Activated T-helper 2 cell treated with anti-CD3 and anti-CD28 coated beads, Interferon-gamma antibody, Interleukin-2, Interleukin-4, amounts not matched to agents 10 μg/mL and 5 μg/mL and 100 μg/mL, durations not matched to agents 14 hours and 24 hours and 36 hours (primary cell): ENCODE measurements at regions of chr19 and their contacts with region 1.

Region 1: GRCh38 chr19:9435279-9436268 is at the start of gene ZNF266:
- DNase-seq: peak; percentile 90
- H3K4me3 Mint-ChIP-seq: peak within 1 kb of the TSS; percentile 94
- H3K27ac Mint-ChIP-seq: peak within 1 kb of the TSS; percentile 98
- H3K4me1 Mint-ChIP-seq: peaks cover 20% of the 10 kb centered on the region
- H3K27me3 Mint-ChIP-seq: no peaks in the 10 kb centered on the region
- total RNA-seq, gene ZNF266: 26.5 and 27.3 TPM in 2 replicates

Region 2: DNA sequence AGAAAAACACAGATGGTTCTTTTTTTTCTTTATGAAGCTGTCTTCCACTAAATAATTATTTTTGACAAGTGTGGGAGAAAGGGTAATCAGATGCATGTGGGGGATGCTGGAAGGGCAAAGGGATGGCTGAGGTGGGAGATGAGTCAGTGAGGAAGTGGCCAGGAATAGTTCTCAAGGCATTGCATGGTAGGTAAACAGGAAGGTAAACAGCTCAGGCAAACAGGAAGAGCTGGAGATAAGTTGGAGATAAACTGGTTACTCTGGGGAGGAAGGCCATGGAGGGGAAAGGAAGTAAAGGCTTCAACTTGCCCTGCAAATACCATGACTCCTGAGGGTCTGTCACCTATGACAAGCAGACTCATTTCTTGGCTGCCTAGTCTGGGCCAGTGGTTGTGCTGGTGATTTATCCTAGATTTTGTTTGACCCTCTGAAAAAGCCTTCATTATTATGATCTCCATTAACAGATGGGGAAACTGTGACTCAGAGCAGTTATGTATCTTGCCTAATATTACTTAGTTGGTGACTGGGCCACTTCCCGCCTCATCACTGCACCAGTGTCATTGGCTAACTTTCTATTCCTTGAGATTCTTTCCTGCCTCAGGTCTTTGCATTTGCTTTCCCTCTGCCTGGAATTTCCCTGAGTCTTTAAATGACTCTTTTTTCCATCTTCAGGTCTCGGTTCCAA is 754.1 kb before region 1 on chr19:
- intact Hi-C with region 1: no loop called
- DNase-seq: no peak
- H3K4me3 Mint-ChIP-seq: no peak overlapping the region
- H3K27ac Mint-ChIP-seq: no peak overlapping the region
- H3K4me1 Mint-ChIP-seq: peaks cover 24% of the 10 kb centered on the region
- H3K27me3 Mint-ChIP-seq: peaks cover 7% of the 10 kb centered on the region

Region 3: DNA sequence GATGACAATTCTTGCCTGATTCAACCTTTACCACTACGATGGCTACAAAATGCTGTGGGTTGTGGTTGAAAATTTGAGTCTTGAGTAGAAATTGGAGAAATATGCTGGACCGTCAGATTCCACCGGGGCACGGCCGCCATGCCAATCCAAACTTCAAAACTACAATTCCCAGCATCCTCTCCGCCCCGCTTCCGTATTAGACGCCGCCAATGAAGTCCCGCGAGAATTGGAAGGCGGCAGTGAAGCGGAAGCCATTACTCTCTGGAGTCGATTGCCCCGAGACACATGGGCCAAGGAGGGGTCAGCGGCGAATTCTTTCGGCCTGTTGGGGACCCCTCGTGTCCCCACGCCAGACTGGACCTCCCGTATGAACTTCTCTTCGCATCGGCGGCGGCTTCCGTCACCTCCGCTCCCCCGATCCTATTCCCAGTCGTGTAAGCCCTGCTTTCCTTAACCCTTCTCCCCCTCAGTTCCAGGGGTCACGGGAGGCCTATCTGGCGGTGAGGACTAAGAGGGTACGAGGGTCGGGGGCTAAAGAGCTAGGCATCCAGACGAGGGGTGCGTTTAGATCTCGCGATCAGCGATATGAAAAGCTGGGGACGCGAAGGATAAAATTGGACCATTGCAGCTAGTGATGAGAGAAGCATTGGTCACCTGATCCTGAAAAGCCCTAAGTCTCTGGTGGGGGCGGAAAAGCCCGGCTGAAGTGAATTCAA is 295.3 kb before region 1 on chr19 and contains the start of gene ZNF317:
- intact Hi-C with region 1: loop called (anchors 2 kb)
- DNase-seq: peak; percentile 86
- H3K4me3 Mint-ChIP-seq: peak within 1 kb of the TSS; percentile 94
- H3K27ac Mint-ChIP-seq: peak within 1 kb of the TSS; percentile 95
- H3K4me1 Mint-ChIP-seq: peaks cover 17% of the 10 kb centered on the region
- H3K27me3 Mint-ChIP-seq: no peaks in the 10 kb centered on the region
- total RNA-seq, gene ZNF317: 44.2 and 50.0 TPM in 2 replicates

Region 4: DNA sequence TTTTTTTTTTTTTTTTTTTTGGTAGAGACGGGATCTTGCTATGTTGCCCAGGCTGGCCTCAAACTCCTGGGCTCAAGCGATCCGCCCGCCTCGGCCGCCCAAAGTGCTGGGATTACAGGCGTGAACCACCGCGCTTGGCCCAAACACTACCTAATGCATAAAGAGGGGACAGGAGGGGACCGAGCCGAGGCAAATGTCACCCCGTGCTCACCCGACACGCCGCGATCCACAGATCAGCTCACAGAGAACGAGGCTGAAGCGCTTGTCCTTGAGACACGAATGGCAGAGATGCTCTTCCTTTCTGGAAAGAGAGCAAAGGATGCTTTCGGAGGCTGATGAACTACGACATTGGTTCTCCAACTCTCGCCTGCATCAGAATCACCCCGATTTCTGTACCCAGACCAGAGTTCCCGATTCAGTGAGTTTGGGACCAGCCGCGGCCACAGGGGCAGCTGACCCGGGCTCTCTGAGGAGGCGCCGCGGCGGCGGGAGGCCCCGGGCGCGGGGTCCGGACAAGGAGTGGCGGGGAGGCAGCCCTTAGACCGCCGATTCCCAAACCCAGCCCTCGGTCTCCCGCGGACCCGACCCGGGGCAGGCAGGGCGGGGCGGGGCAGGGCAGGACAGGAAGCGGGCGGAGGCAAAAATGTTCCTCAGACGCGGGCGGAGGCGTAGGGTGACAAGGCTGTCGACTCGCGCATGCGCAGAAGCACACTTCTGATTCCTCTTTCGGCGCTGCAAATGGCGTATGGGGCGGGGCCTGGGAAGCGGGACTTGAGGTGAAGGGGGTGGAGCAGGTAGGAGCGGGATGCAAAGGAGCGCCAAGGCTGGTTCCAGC is 126.2 kb before region 1 on chr19 and contains the start of gene ZNF699:
- intact Hi-C with region 1: loop called (anchors 1 kb)
- DNase-seq: peak; percentile 98
- H3K4me3 Mint-ChIP-seq: peak within 1 kb of the TSS; percentile 79
- H3K27ac Mint-ChIP-seq: peak within 1 kb of the TSS; percentile 89
- H3K4me1 Mint-ChIP-seq: peaks cover 12% of the 10 kb centered on the region
- H3K27me3 Mint-ChIP-seq: no peaks in the 10 kb centered on the region
- total RNA-seq, gene ZNF699: 4.4 and 5.2 TPM in 2 replicates

Region 5: DNA sequence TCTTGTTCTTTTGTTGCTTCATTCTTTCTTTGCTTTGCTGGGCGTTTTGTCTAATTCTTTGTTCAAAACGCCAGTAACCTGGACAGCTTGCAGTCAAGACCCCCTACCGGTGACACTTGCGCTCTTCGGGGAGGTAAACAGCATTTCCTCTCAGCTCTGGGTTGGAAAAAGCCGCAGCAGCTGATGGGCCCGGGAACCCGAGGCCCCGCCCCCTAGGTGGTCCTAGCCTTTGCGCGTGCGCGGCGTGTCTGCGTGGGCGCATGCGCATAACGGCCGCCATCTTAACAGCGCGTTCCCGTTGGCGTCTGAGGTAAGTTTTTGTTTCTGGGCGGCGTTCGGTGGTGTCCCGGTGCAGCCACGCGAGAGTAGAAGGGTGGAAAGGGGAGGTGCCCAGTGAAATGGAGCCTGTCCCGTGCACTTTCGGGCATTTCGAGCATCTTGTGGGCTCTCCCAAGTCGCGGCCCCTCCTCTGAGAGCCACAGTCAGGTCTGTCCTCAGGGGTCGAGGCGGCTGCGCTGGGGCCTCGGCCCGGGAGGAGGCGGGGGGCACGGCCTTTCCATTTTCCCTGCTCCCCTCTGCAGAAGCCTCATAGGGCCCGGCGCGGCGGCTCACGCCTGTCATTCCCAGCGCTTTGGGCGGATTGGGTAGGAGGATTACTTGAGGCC is 111.5 kb before region 1 on chr19 and contains the start of gene ZNF559:
- intact Hi-C with region 1: loop called (anchors 2 kb)
- DNase-seq: peak; percentile 94
- H3K4me3 Mint-ChIP-seq: peak within 1 kb of the TSS; percentile 86
- H3K27ac Mint-ChIP-seq: peak within 1 kb of the TSS; percentile 88
- H3K4me1 Mint-ChIP-seq: peaks cover 12% of the 10 kb centered on the region
- H3K27me3 Mint-ChIP-seq: no peaks in the 10 kb centered on the region
- total RNA-seq, gene ZNF559: 8.2 and 8.4 TPM in 2 replicates

Region 6: DNA sequence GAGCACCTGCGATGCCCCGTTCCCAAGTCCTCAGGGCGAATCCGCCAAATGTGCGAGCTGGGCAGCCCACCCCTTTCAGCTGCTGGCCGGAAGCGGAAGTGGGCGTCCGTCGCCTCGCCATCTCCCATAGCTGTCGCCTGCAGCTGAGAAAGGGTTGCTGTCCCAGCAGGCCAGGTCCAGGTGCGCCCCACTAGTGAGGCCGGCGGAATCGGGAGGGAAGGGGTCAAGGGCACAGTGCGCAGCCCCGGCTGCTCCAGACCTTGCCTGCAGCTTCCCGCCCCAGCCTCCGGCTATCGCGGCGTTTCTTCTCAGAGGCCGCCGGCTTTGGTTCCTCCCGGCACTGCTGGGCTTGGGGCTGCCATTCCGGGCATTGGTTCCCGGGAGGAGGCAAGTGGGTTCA is 72.7 kb before region 1 on chr19 and contains the start of gene ZNF177:
- intact Hi-C with region 1: no loop called
- DNase-seq: no peak
- H3K4me3 Mint-ChIP-seq: no peak within 1 kb of the TSS
- H3K27ac Mint-ChIP-seq: no peak within 1 kb of the TSS
- H3K4me1 Mint-ChIP-seq: no peaks in the 10 kb centered on the region
- H3K27me3 Mint-ChIP-seq: no peaks in the 10 kb centered on the region
- total RNA-seq, gene ZNF177: 0.46 and 0.48 TPM in 2 replicates

Region 7: DNA sequence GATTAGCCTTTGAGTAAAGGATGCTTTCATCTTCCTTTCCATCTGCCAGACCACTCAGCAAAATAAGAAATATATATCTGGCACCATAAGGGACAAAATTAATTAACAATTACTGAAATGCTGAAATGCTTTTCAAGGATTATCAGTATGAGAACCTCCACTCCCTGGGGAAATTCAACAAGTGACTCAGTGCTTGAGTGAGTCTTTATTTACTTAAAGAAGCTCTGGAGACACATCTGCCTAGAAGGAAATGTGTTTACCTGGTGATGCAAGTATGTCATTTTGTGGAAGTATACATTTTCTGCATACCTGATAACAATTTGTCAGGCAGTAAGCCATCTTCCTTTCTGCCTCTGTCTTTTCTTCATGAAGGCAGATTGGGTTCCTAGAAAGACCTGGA is 39.4 kb after region 1 on chr19:
- intact Hi-C with region 1: no loop called
- DNase-seq: no peak
- H3K4me3 Mint-ChIP-seq: no peak overlapping the region
- H3K27ac Mint-ChIP-seq: no peak overlapping the region
- H3K4me1 Mint-ChIP-seq: no peaks in the 10 kb centered on the region
- H3K27me3 Mint-ChIP-seq: no peaks in the 10 kb centered on the region

Region 8: GRCh38 chr19:9523885-9524474 is 88.4 kb after region 1 on chr19:
- intact Hi-C with region 1: no loop called
- DNase-seq: no peak
- H3K4me3 Mint-ChIP-seq: no peak overlapping the region
- H3K27ac Mint-ChIP-seq: no peak overlapping the region
- H3K4me1 Mint-ChIP-seq: no peaks in the 10 kb centered on the region
- H3K27me3 Mint-ChIP-seq: no peaks in the 10 kb centered on the region

Region 9: DNA sequence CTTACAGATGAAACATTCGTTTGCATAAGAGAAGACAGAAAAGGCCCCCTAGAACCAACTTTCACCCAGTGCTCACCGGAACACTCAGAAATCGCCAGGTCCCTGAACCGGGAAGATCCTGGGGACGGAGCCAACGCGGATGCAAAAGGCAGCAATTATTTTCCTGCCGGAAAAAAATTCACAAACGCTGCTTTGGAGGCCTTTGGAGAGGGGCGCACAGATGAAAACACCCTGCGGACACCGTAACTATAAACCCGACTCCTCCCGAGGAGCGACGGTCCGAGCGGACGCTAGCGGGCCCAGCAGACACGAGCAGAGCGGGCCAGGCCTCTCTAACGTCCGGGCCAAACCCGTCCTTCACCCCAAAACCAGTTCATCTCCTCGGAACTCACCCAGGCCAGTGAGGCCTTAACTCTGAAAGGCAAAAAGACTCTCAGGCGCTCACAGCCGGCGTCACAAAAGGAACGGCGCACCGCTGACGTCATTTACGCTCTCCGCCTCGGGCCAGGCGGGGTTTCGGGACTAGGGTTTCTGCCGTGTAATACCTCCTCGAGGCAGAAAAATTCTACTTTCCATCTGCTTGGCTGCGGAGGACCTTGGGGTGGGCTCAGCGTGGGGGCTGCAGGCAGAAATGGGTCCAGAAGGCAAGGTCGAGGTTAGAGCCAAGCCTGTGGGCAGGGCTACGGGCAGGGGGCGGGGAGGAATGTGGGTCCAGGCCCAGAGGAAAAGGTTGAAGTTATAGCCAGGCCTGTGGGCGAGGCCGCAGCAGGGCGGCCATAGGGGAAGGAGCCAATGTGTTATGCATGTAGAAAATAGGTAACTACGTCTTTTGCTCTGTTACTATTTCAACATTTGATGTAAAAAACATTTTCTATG is 102.8 kb after region 1 on chr19 and contains the start of gene ZNF426:
- intact Hi-C with region 1: loop called (anchors 5 kb)
- DNase-seq: peak; percentile 76
- H3K4me3 Mint-ChIP-seq: peak within 1 kb of the TSS; percentile 93
- H3K27ac Mint-ChIP-seq: peak within 1 kb of the TSS; percentile 95
- H3K4me1 Mint-ChIP-seq: peaks cover 5% of the 10 kb centered on the region
- H3K27me3 Mint-ChIP-seq: no peaks in the 10 kb centered on the region
- total RNA-seq, gene ZNF426: 10.4 and 10.5 TPM in 2 replicates

Region 10: GRCh38 chr19:9584073-9584833 is 148.7 kb after region 1 on chr19 and contains the start of gene ZNF121:
- intact Hi-C with region 1: loop called (anchors 5 kb)
- DNase-seq: peak; percentile 77
- H3K4me3 Mint-ChIP-seq: peak within 1 kb of the TSS; percentile 91
- H3K27ac Mint-ChIP-seq: peak within 1 kb of the TSS; percentile 92
- H3K4me1 Mint-ChIP-seq: peaks cover 12% of the 10 kb centered on the region
- H3K27me3 Mint-ChIP-seq: peaks cover 2% of the 10 kb centered on the region
- total RNA-seq, gene ZNF121: 57.2 and 62.2 TPM in 2 replicates

Region 11: GRCh38 chr19:9674663-9675357 is 239.2 kb after region 1 on chr19 and contains the start of gene ZNF562:
- intact Hi-C with region 1: loop called (anchors 5 kb)
- DNase-seq: peak; percentile 70
- H3K4me3 Mint-ChIP-seq: peak within 1 kb of the TSS; percentile 87
- H3K27ac Mint-ChIP-seq: peak within 1 kb of the TSS; percentile 93
- H3K4me1 Mint-ChIP-seq: peaks cover 10% of the 10 kb centered on the region
- H3K27me3 Mint-ChIP-seq: no peaks in the 10 kb centered on the region
- total RNA-seq, gene ZNF562: 17.3 and 18.2 TPM in 2 replicates